OCI-LY7 (cell line): ENCODE measurements at regions of chr2 and their contacts with region 1.

Region 1: DNA sequence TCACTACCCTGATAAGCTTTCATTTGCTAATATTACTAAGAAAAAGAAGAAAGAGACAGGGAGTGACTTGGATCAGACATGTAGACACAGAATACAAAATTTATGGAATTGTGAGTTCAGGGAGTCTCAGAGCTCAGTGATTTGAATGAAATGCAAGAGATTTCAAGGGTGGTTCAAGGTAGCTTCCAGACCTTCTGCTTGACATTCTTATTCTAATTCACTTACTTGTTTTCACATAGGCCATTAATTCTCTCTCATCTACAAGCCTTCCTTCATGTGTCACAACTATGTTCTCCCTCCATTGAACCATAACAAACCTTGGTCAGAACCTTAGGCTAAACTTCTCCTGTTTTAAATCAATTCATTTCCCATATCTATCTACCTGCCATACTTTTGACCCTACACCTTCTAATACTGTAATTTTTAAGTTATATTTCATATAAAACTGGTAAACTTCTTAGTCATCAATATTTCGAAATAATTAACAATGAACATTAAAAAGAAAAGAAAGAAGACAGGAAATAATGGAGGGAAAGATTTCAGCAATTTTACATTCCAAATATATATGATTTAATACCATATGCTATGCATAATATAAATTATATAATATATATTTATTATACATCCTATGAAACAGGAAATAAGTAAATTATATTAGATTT is 139.2 kb upstream of the PDE1A start:
- DNase-seq: no peak
- H3K4me3 ChIP-seq: no peak overlapping the region
- H3K27ac ChIP-seq: no peak overlapping the region
- H3K4me1 ChIP-seq: no peaks in the 10 kb centered on the region
- CTCF ChIP-seq: no peak

Region 2: GRCh38 chr2:182581196-182581935 is 15.3 kb after region 1 on chr2:
- CTCF ChIA-PET with region 1: no interaction called
- POLR2A ChIA-PET with region 1: interaction called, 11 read pairs
- intact Hi-C with region 1: no loop called
- DNase-seq: no peak
- H3K4me3 ChIP-seq: no peak overlapping the region
- H3K27ac ChIP-seq: no peak overlapping the region
- H3K4me1 ChIP-seq: no peaks in the 10 kb centered on the region
- CTCF ChIP-seq: no peak